ENCODE measurements at regions of chr6 and their contacts with region 1.

Region 1: DNA sequence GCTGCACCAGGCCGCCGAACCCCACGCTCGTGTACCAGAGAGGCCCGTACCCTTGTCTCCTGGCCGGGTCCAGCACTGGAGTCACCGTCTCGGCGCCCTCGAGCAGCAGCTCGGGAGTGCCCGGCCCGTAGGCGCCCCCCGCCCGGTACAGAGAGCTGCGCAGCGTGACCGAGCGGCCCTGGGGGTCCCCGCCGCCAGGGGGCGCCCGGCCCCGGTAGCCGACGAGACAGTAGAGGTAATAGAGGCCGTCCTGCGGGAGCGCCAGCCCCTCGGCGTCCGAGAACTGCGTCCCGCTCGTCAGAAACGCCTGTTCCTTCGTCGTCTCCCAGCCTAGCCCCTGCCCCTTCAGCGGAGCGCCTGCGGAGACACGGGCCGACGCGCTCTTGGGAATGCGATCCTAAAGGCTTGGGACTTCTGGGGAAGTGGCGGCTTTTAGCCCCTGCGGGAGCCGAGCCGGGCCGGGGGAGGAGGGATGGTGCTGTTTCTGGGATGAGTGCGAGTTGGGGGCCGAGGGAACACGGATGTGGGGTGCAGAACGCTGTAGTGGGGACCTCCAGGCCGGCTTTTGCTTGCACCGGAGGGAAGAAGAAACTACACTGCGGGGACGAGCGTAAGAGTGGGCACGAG is 1.3 kb downstream of the LTB start:
- DNase-seq: peak; percentile 81 to 97 (median 90)
- ATAC-seq: peak; percentile 73
- H3K4me3 ChIP-seq: peak overlapping the region; percentile 92 to 100
- H3K4me3 Mint-ChIP-seq: peak overlapping the region; percentile 99
- H3K27ac ChIP-seq: peak overlapping the region; percentile 77 to 91
- H3K27ac Mint-ChIP-seq: peak overlapping the region; percentile 96
- H3K4me1 ChIP-seq: peaks cover 69% of the 10 kb centered on the region
- H3K4me1 Mint-ChIP-seq: peaks cover 77% of the 10 kb centered on the region
- H3K27me3 ChIP-seq: no peaks in the 10 kb centered on the region
- H3K27me3 Mint-ChIP-seq: no peaks in the 10 kb centered on the region
- CTCF ChIP-seq: peak; percentile 98

Region 2: GRCh38 chr6:31559958-31560696 is 20.8 kb before region 1 on chr6:
- CTCF ChIA-PET with region 1: interaction called, 1,206 read pairs
- POLR2A ChIA-PET with region 1: interaction called, 43 read pairs
- intact Hi-C with region 1: no loop called
- DNase-seq: peak in 7 of 9 experiments; percentile 36 to 80 (median 59)
- ATAC-seq: peak; percentile 54
- H3K4me3 ChIP-seq: peak overlapping the region; percentile 4 to 13
- H3K4me3 Mint-ChIP-seq: peak overlapping the region; percentile 80
- H3K27ac ChIP-seq: peak overlapping the region in 1 of 2 experiments; percentile 78
- H3K27ac Mint-ChIP-seq: peak overlapping the region; percentile 90
- H3K4me1 ChIP-seq: peaks cover 52% of the 10 kb centered on the region
- H3K4me1 Mint-ChIP-seq: peaks cover 62% of the 10 kb centered on the region
- H3K27me3 ChIP-seq: no peaks in the 10 kb centered on the region
- H3K27me3 Mint-ChIP-seq: no peaks in the 10 kb centered on the region
- CTCF ChIP-seq: no peak

Region 3: GRCh38 chr6:31568537-31568961 is 12.4 kb before region 1 on chr6:
- CTCF ChIA-PET with region 1: interaction called, 1,206 read pairs
- POLR2A ChIA-PET with region 1: interaction called, 31 read pairs
- intact Hi-C with region 1: loop called in 1 of 2 experiments (anchors 1 kb)
- DNase-seq: peak in 8 of 9 experiments; percentile 38 to 96 (median 66)
- ATAC-seq: peak; percentile 55
- H3K4me3 ChIP-seq: no peak overlapping the region
- H3K4me3 Mint-ChIP-seq: peak overlapping the region; percentile 44
- H3K27ac ChIP-seq: peak overlapping the region; percentile 11 to 90
- H3K27ac Mint-ChIP-seq: peak overlapping the region; percentile 93
- H3K4me1 ChIP-seq: peaks cover 60% of the 10 kb centered on the region
- H3K4me1 Mint-ChIP-seq: peaks cover 69% of the 10 kb centered on the region
- H3K27me3 ChIP-seq: no peaks in the 10 kb centered on the region
- H3K27me3 Mint-ChIP-seq: no peaks in the 10 kb centered on the region
- CTCF ChIP-seq: no peak

Measured in CD8-positive, alpha-beta T cell (primary cell).